HepG2 (cell line): ENCODE measurements at regions of chr16 and their contacts with region 1.

Region 1: DNA sequence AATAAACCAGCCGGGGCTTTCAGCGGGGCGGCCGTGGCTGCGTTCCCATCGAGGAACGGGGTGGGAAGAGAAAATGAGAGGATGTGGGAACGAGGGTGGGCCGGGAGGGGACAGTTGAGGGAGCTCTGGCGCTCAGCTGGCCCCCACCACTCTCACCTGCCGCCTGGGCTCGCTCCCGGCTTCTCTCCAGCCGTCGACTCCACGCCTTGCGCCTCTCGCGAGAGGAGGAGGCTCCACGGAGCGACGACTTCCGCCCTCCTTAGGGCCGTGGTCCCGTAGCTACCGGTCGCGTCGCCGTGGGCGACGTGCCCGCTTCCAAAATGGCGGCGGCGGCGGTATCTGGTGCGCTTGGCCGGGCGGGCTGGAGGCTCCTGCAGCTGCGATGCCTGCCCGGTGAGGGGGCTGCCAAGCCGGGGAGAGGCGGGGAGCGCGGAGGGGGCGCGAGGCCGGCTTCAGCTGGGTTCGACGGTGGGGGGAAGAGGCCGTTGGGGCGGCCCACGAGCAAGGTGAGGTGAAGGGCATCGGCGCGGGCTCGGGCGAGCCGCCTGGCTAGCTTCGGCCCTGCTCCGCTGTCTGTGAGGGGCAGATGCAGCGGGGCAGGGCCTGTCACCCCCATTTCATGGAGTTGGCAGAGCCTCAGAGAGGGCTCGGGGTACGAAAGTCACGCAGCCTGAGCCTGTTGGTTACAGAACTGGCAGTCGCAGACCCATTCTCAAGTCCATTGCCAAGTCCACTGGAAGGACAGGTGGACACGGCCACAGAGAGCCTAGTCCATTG is at the starts of genes CIAPIN1 and COQ9:
- DNase-seq: peak; percentile 92
- ATAC-seq: peak; percentile 99
- H3K4me3 ChIP-seq: peak within 1 kb of the TSS; percentile 81 to 95 (median 90)
- H3K27ac ChIP-seq: peak within 1 kb of the TSS; percentile 76
- H3K4me1 ChIP-seq: peaks cover 46% of the 10 kb centered on the region
- H3K27me3 ChIP-seq: no peaks in the 10 kb centered on the region; a peak in 1 of 5 replicates
- CTCF ChIP-seq: peak; percentile 41
- EP300 ChIP-seq: peak in 1 of 2 experiments; percentile 42; a peak in 1 of 4 replicates
- POLR2A ChIP-seq: peak; percentile 90 to 92; a peak in 3 of 4 replicates
- RAD21 ChIP-seq: peak; percentile 63; the same call in 1 of the 2 replicates
- total RNA-seq, gene CIAPIN1: 89.7 and 113 TPM in 2 replicates
- total RNA-seq, gene COQ9: 57.5 and 62.0 TPM in 2 replicates

Region 2: DNA sequence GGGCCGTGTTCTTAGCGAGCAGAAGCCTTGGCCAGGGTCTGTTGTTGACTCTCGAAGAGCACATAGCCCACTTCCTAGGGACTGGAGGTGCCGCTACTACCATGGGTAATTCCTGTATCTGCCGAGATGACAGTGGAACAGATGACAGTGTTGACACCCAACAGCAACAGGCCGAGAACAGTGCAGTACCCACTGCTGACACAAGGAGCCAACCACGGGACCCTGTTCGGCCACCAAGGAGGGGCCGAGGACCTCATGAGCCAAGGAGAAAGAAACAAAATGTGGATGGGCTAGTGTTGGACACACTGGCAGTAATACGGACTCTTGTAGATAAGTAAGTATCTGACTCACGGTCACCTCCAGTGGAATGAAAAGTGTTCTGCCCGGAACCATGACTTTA is 242.7 kb before region 1 on chr16:
- CTCF ChIA-PET with region 1: no interaction called
- POLR2A ChIA-PET with region 1: no interaction called
- in situ Hi-C with region 1: no loop called
- intact Hi-C with region 1: no loop called
- DNase-seq: no peak
- ATAC-seq: peak; percentile 82
- H3K4me3 ChIP-seq: no peak overlapping the region
- H3K27ac ChIP-seq: no peak overlapping the region
- H3K4me1 ChIP-seq: peaks cover under 1% of the 10 kb centered on the region; the same call in 1 of the 2 replicates
- H3K27me3 ChIP-seq: no peaks in the 10 kb centered on the region
- CTCF ChIP-seq: no peak
- EP300 ChIP-seq: no peak
- POLR2A ChIP-seq: no peak
- RAD21 ChIP-seq: no peak

Region 3: GRCh38 chr16:57260294-57260929 is 187.0 kb before region 1 on chr16:
- CTCF ChIA-PET with region 1: no interaction called
- POLR2A ChIA-PET with region 1: no interaction called
- in situ Hi-C with region 1: no loop called
- intact Hi-C with region 1: no loop called
- DNase-seq: no peak
- ATAC-seq: no peak
- H3K4me3 ChIP-seq: no peak overlapping the region
- H3K27ac ChIP-seq: peak overlapping the region; percentile 19
- H3K4me1 ChIP-seq: no peaks in the 10 kb centered on the region
- H3K27me3 ChIP-seq: no peaks in the 10 kb centered on the region
- CTCF ChIP-seq: no peak
- EP300 ChIP-seq: no peak
- POLR2A ChIP-seq: no peak
- RAD21 ChIP-seq: no peak

Region 4: GRCh38 chr16:57403965-57404817 is 43.2 kb before region 1 on chr16 and contains the start of gene CCL17:
- CTCF ChIA-PET with region 1: no interaction called
- POLR2A ChIA-PET with region 1: no interaction called
- in situ Hi-C with region 1: no loop called
- intact Hi-C with region 1: no loop called
- DNase-seq: no peak
- ATAC-seq: peak; percentile 47; the same call in 2 of the 3 replicates
- H3K4me3 ChIP-seq: no peak within 1 kb of the TSS
- H3K27ac ChIP-seq: no peak within 1 kb of the TSS
- H3K4me1 ChIP-seq: peaks cover 11% of the 10 kb centered on the region; the same call in 1 of the 2 replicates
- H3K27me3 ChIP-seq: peaks cover 0 to 9% of the 10 kb centered on the region in 2 experiments; a peak in 2 of 5 replicates
- CTCF ChIP-seq: no peak
- EP300 ChIP-seq: no peak
- POLR2A ChIP-seq: no peak
- RAD21 ChIP-seq: no peak
- total RNA-seq, gene CCL17: not detected in 2 replicates

Region 5: GRCh38 chr16:57422026-57422944 is 25.1 kb before region 1 on chr16:
- CTCF ChIA-PET with region 1: no interaction called
- POLR2A ChIA-PET with region 1: interaction called, 7 read pairs
- in situ Hi-C with region 1: no loop called
- intact Hi-C with region 1: loop called (anchors 2 kb)
- DNase-seq: peak; percentile 77
- ATAC-seq: peak; percentile 74
- H3K4me3 ChIP-seq: no peak overlapping the region; a peak in 1 of 6 replicates
- H3K27ac ChIP-seq: no peak overlapping the region
- H3K4me1 ChIP-seq: peaks cover 32% of the 10 kb centered on the region
- H3K27me3 ChIP-seq: no peaks in the 10 kb centered on the region
- CTCF ChIP-seq: peak; percentile 91
- EP300 ChIP-seq: no peak
- POLR2A ChIP-seq: no peak
- RAD21 ChIP-seq: peak; percentile 72

Region 6: DNA sequence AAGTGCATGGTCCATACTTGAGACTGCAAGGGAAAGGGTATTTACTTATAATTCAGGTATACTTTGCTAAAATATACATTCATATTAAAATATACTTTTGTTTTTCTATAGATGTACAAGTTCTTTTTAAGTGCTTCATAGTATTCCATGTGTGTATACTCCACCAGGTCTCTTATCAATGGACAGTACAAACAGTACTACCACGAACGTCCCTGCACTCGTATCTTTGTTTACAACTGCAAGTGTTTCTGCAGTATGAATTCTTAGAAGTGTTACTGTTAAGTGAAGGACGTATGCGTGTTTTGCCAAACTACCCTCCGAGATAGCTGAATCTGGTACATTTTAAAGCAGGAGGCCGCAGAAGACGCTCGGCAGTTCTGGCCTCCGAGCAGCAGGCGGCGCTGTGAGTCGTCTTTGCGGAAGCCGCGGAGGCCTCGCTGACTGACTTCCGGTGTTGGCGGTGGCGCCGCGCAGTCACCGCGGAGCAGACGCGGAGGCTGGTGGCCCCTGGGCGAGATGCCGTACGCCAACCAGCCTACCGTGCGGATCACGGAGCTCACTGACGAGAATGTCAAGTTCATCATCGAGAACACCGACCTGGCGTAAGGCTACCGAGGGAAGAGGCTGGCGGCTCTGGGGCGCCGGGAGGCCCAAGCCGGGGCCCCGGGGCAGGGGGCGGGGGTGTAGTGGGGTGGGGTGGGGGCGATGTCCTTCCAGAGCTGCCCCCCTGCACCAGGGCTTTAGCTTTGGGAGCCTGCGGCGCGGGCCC is 15.0 kb after region 1 on chr16 and contains the start of gene POLR2C:
- CTCF ChIA-PET with region 1: no interaction called
- POLR2A ChIA-PET with region 1: interaction called, 52 read pairs
- in situ Hi-C with region 1: no loop called
- intact Hi-C with region 1: no loop called
- DNase-seq: peak; percentile 80
- ATAC-seq: peak; percentile 97
- H3K4me3 ChIP-seq: peak within 1 kb of the TSS; percentile 94 to 100 (median 99)
- H3K27ac ChIP-seq: peak within 1 kb of the TSS; percentile 63
- H3K4me1 ChIP-seq: peaks cover 33% of the 10 kb centered on the region
- H3K27me3 ChIP-seq: no peaks in the 10 kb centered on the region; a peak in 1 of 5 replicates
- CTCF ChIP-seq: peak; percentile 99
- EP300 ChIP-seq: 0 out of 4 replicates have a peak, but pooled peaks of 1 of the 2 experiments have one; percentile 34
- POLR2A ChIP-seq: peak; percentile 99
- RAD21 ChIP-seq: peak; percentile 92
- total RNA-seq, gene POLR2C: 104 and 146 TPM in 2 replicates

Region 7: GRCh38 chr16:57475711-57476339 is 28.5 kb after region 1 on chr16:
- CTCF ChIA-PET with region 1: no interaction called
- POLR2A ChIA-PET with region 1: interaction called, 55 read pairs
- in situ Hi-C with region 1: no loop called
- intact Hi-C with region 1: no loop called
- DNase-seq: peak; percentile 69
- ATAC-seq: peak; percentile 73
- H3K4me3 ChIP-seq: no peak overlapping the region
- H3K27ac ChIP-seq: peak overlapping the region; percentile 11
- H3K4me1 ChIP-seq: peaks cover 84% of the 10 kb centered on the region
- H3K27me3 ChIP-seq: no peaks in the 10 kb centered on the region
- CTCF ChIP-seq: peak; percentile 64
- EP300 ChIP-seq: 0 out of 4 replicates have a peak, but pooled peaks of 1 of the 2 experiments have one; percentile 21
- POLR2A ChIP-seq: no peak
- RAD21 ChIP-seq: peak; percentile 94

Region 8: GRCh38 chr16:57507136-57508034 is 60.0 kb after region 1 on chr16:
- CTCF ChIA-PET with region 1: no interaction called
- POLR2A ChIA-PET with region 1: interaction called, 11 read pairs
- in situ Hi-C with region 1: no loop called
- intact Hi-C with region 1: no loop called
- DNase-seq: no peak
- ATAC-seq: no peak
- H3K4me3 ChIP-seq: no peak overlapping the region
- H3K27ac ChIP-seq: no peak overlapping the region
- H3K4me1 ChIP-seq: peaks cover 42% of the 10 kb centered on the region
- H3K27me3 ChIP-seq: peaks cover 8 to 45% of the 10 kb centered on the region in 2 experiments; a peak in 4 of 5 replicates
- CTCF ChIP-seq: no peak
- EP300 ChIP-seq: no peak
- POLR2A ChIP-seq: no peak
- RAD21 ChIP-seq: no peak